AG04449 (cell line): ENCODE measurements at regions of chr16 and their contacts with region 1.

Region 1: GRCh38 chr16:83826146-83826913 is 18.6 kb downstream of the HSBP1 start:
- DNase-seq: no peak
- H3K4me3 ChIP-seq: no peak overlapping the region
- CTCF ChIP-seq: peak; percentile 94

Region 2: DNA sequence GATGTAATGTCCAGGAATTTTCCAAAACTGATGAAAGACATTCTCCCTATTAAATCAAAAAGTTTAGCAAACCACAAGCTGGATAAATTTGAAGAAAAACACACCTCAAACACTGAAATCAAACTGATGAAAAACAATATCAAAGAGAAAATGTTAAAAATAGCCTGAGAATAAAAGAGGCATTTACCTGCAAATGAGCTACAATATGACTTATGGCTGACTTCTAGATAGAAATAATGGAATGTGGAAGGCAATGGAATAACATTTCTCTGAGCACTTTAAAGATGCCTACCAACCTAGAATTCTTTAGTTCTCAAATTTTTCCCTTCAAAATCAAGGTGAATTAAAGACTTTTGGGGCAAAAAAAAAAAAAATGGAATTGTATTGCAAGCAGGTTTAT is 70.9 kb before region 1 on chr16:
- CTCF ChIA-PET with region 1: no interaction called
- POLR2A ChIA-PET with region 1: no interaction called
- DNase-seq: no peak
- H3K4me3 ChIP-seq: no peak overlapping the region
- CTCF ChIP-seq: no peak

Region 3: DNA sequence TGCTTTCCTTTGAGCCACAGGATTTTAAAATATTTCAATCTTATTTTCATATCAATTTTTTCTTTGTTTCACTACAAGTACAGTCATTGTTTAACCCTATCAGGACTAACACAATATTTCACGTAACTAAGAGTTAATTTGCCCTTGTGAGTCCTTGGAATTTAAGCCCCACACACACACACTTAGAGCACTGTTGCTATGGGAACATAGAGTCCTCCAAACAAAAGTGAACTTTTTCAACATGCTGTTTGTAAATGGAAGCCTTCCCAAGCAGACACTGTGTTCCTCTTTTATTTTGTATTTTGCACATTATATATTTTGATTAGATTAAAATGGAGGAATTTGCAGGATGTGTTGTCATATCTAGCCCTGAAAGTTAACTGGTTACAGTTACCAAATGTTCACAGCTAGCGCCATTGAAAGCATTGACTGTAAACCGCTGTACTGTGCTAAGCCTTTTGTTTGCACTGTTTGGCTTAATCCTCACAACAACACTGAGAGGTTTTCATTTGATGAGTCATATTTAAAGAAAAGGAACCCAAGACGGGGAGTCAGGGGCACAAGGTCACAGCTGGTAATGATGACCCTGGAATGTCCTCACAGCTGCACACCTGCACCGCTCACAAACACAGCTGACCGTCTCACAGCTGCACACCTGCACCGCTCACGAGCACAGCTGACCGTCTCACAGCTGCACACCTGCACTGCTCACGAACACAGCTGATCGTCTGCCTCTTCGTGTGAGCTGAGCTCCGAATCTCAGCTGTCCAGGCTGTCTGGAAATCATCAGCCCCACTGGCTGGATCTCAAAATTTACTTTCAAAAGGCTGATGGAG is 12.3 kb before region 1 on chr16:
- CTCF ChIA-PET with region 1: interaction called, 48 read pairs
- POLR2A ChIA-PET with region 1: no interaction called
- DNase-seq: no peak
- H3K4me3 ChIP-seq: peak overlapping the region; percentile 37
- CTCF ChIP-seq: no peak

Region 4: GRCh38 chr16:83842756-83843507 is 16.6 kb after region 1 on chr16:
- CTCF ChIA-PET with region 1: interaction called, 10 read pairs
- POLR2A ChIA-PET with region 1: no interaction called
- DNase-seq: no peak
- H3K4me3 ChIP-seq: no peak overlapping the region
- CTCF ChIP-seq: no peak

Region 5: DNA sequence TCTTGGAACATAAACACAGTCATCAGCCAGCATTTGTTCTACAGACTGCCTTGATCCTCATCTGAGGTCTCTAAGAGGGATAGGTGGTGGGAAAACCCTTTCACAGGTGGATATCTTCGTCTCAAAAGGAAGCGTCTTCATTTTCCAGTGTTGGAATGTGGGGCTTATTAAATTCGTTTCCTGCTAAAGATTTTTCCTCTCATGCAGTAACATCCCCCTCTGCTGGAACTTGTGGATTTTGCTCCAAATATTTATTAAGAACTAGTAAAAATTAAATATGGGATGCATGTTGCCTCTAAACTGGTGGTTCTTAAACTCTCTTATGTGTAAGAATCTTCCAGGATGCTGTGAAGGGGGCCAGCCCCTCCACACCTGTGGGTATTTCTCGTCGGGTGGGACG is 52.5 kb after region 1 on chr16:
- CTCF ChIA-PET with region 1: interaction called, 28 read pairs
- POLR2A ChIA-PET with region 1: no interaction called
- DNase-seq: no peak
- H3K4me3 ChIP-seq: no peak overlapping the region
- CTCF ChIP-seq: peak; percentile 35